A549 (cell line): ENCODE measurements at regions of chr7 and their contacts with region 1.

Region 1: GRCh38 chr7:43700059-43700501 is 29.2 kb downstream of the COA1 start:
- DNase-seq: peak; percentile 28 to 56
- ATAC-seq: peak; percentile 78 to 80; a peak in 4 of 6 replicates
- H3K4me3 ChIP-seq: no peak overlapping the region
- H3K27ac ChIP-seq: no peak overlapping the region
- H3K4me1 ChIP-seq: peaks cover 42% of the 10 kb centered on the region
- CTCF ChIP-seq: peak; percentile 96
- EP300 ChIP-seq: no peak
- POLR2A ChIP-seq: no peak
- RAD21 ChIP-seq: peak; percentile 93 to 96

Region 2: GRCh38 chr7:43618073-43618472 is 82.0 kb before region 1 on chr7:
- CTCF ChIA-PET with region 1: interaction called, 14 read pairs
- POLR2A ChIA-PET with region 1: no interaction called
- DNase-seq: no peak
- ATAC-seq: peak in 1 of 2 experiments; percentile 11; a peak in 1 of 6 replicates
- H3K4me3 ChIP-seq: no peak overlapping the region
- H3K27ac ChIP-seq: no peak overlapping the region
- H3K4me1 ChIP-seq: peaks cover 13% of the 10 kb centered on the region
- CTCF ChIP-seq: no peak
- EP300 ChIP-seq: no peak
- POLR2A ChIP-seq: no peak
- RAD21 ChIP-seq: no peak

Region 3: DNA sequence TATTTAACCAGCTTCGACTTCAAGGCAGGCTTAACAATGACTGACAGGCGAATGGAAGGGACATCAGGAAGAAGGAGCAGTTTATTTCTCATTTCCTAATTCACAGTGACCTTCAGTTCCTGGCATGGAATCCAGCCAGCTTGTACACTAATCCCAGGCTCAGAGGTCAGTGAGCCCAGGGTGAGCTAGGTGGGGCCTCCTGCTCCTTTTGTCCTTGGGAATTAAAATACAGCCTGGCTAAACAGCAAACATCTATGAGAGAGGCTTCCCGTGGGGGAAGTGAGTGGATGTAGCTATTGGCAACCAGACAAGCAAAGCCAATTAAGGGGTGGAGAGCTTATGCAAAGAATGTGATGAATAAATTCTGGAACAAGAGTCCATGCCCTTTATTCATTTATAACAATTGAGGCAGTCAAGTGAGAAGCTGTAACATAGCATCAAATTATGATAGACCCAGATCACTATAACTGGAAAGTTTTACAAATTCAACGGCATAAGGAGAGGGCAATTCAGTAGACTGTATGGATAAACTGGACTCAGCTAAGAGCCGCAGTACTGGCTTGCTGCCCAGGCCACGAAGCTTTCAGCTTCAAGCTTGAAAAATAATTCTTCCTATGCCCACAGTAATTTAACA is 60.1 kb before region 1 on chr7:
- CTCF ChIA-PET with region 1: interaction called, 17 read pairs
- POLR2A ChIA-PET with region 1: no interaction called
- DNase-seq: peak in 1 of 2 experiments; percentile 32
- ATAC-seq: peak; percentile 25 to 37; a peak in 3 of 6 replicates
- H3K4me3 ChIP-seq: no peak overlapping the region
- H3K27ac ChIP-seq: peak overlapping the region in 1 of 2 experiments; percentile 17; a peak in 2 of 6 replicates
- H3K4me1 ChIP-seq: peaks cover 28% of the 10 kb centered on the region; the same call in 2 of the 3 replicates
- CTCF ChIP-seq: no peak
- EP300 ChIP-seq: no peak
- POLR2A ChIP-seq: no peak
- RAD21 ChIP-seq: no peak

Region 4: GRCh38 chr7:43711503-43711902 is 11.4 kb after region 1 on chr7:
- CTCF ChIA-PET with region 1: interaction called, 16 read pairs
- POLR2A ChIA-PET with region 1: no interaction called
- DNase-seq: no peak
- ATAC-seq: no peak
- H3K4me3 ChIP-seq: no peak overlapping the region
- H3K27ac ChIP-seq: no peak overlapping the region
- H3K4me1 ChIP-seq: no peaks in the 10 kb centered on the region
- CTCF ChIP-seq: no peak
- EP300 ChIP-seq: no peak
- POLR2A ChIP-seq: no peak
- RAD21 ChIP-seq: no peak

Region 5: GRCh38 chr7:43729214-43729923 is 29.3 kb after region 1 on chr7 and contains the start of gene COA1:
- CTCF ChIA-PET with region 1: interaction called, 11 read pairs
- POLR2A ChIA-PET with region 1: no interaction called
- DNase-seq: peak; percentile 77 to 95
- ATAC-seq: peak; percentile 98 to 99
- H3K4me3 ChIP-seq: peak within 1 kb of the TSS; percentile 57
- H3K27ac ChIP-seq: peak within 1 kb of the TSS; percentile 85 to 98
- H3K4me1 ChIP-seq: peaks cover 7% of the 10 kb centered on the region; the same call in 2 of the 3 replicates
- CTCF ChIP-seq: no peak
- EP300 ChIP-seq: no peak
- POLR2A ChIP-seq: peak; percentile 81
- RAD21 ChIP-seq: no peak; a peak in 2 of 5 replicates
- polyA plus RNA-seq, gene COA1: 57.5 and 84.0 TPM in 2 replicates